ENCODE measurements at regions of chr9 and their contacts with region 1.

Region 1: DNA sequence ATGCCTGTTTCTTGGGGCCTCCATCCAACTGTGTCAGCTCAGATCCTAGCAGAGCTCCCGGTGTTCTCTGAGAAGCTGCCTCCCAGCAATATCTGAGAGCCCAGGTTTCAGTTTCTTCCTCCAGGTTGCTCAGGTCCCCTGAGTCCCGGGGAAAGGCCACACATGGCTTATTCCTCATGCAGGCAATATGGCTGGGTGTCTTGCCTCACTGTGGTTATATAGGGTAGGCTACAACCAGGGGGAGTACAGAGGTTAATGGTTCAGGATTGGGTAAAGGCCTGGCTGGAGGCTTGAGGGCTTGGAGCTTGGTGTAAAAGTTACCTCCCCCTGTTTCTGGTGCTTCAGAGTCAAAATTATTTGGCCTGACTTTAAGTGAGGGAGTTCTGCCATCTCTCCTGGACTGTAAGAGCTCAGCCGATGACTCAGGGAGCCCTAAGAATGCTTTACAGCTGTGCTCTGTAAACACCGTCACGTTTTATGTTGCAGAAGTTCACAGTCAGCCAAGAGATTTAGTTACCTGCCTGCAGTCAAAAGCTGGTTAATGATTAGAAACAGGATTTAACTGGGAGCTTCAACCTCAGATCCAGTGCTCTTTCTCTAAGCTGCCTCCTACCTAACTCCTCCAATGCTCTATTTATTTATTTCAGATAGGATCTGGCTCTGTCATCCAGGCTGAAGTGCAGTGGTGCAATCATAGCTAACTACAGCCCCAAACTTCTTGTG is 24.3 kb upstream of the UBAP2 start:
- DNase-seq: no peak
- ATAC-seq: peak; percentile 35
- H3K4me3 Mint-ChIP-seq: no peak overlapping the region
- H3K27ac Mint-ChIP-seq: no peak overlapping the region
- H3K4me1 Mint-ChIP-seq: peaks cover 2% of the 10 kb centered on the region
- H3K27me3 Mint-ChIP-seq: no peaks in the 10 kb centered on the region

Region 2: GRCh38 chr9:33988219-33988890 is 84.7 kb before region 1 on chr9:
- CTCF ChIA-PET with region 1: interaction called, 10 read pairs
- POLR2A ChIA-PET with region 1: no interaction called
- DNase-seq: no peak
- ATAC-seq: no peak
- H3K4me3 Mint-ChIP-seq: no peak overlapping the region
- H3K27ac Mint-ChIP-seq: no peak overlapping the region
- H3K4me1 Mint-ChIP-seq: peaks cover 12% of the 10 kb centered on the region
- H3K27me3 Mint-ChIP-seq: no peaks in the 10 kb centered on the region

Region 3: DNA sequence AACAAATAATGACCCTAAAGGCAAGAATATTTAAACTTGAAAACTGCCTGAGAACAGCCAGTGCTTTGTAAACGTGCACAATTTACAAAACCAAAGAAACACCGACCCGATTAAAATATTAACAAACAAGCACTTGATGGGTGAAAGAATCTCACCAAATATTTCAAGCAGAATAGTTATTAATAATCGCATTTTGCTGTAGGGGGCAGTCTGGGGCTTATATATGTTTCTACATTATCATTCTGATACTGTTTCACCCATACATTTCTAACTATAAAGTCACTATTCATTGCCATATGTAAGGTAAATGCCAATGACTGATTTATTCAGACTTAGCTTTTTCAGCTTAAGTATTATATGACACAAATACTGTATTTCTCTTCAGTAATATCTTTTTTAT is 62.0 kb before region 1 on chr9:
- CTCF ChIA-PET with region 1: interaction called, 25 read pairs
- POLR2A ChIA-PET with region 1: no interaction called
- DNase-seq: no peak
- ATAC-seq: no peak
- H3K4me3 Mint-ChIP-seq: no peak overlapping the region
- H3K27ac Mint-ChIP-seq: no peak overlapping the region
- H3K4me1 Mint-ChIP-seq: no peaks in the 10 kb centered on the region
- H3K27me3 Mint-ChIP-seq: no peaks in the 10 kb centered on the region

Region 4: GRCh38 chr9:34048923-34049697 is 23.9 kb before region 1 on chr9:
- CTCF ChIA-PET with region 1: interaction called, 22 read pairs
- POLR2A ChIA-PET with region 1: interaction called, 13 read pairs
- DNase-seq: peak; percentile 98
- ATAC-seq: peak; percentile 86
- H3K4me3 Mint-ChIP-seq: peak overlapping the region; percentile 95
- H3K27ac Mint-ChIP-seq: peak overlapping the region; percentile 99
- H3K4me1 Mint-ChIP-seq: peaks cover 49% of the 10 kb centered on the region
- H3K27me3 Mint-ChIP-seq: no peaks in the 10 kb centered on the region

Region 5: GRCh38 chr9:34084562-34084961 is 11.5 kb after region 1 on chr9:
- CTCF ChIA-PET with region 1: interaction called, 21 read pairs
- POLR2A ChIA-PET with region 1: no interaction called
- DNase-seq: no peak
- ATAC-seq: no peak
- H3K4me3 Mint-ChIP-seq: no peak overlapping the region
- H3K27ac Mint-ChIP-seq: no peak overlapping the region
- H3K4me1 Mint-ChIP-seq: no peaks in the 10 kb centered on the region
- H3K27me3 Mint-ChIP-seq: no peaks in the 10 kb centered on the region

Region 6: GRCh38 chr9:34252670-34253459 is 179.8 kb after region 1 on chr9:
- CTCF ChIA-PET with region 1: interaction called, 13 read pairs
- POLR2A ChIA-PET with region 1: no interaction called
- DNase-seq: peak; percentile 72
- ATAC-seq: peak; percentile 66
- H3K4me3 Mint-ChIP-seq: no peak overlapping the region
- H3K27ac Mint-ChIP-seq: no peak overlapping the region
- H3K4me1 Mint-ChIP-seq: peaks cover 20% of the 10 kb centered on the region
- H3K27me3 Mint-ChIP-seq: no peaks in the 10 kb centered on the region

Region 7: DNA sequence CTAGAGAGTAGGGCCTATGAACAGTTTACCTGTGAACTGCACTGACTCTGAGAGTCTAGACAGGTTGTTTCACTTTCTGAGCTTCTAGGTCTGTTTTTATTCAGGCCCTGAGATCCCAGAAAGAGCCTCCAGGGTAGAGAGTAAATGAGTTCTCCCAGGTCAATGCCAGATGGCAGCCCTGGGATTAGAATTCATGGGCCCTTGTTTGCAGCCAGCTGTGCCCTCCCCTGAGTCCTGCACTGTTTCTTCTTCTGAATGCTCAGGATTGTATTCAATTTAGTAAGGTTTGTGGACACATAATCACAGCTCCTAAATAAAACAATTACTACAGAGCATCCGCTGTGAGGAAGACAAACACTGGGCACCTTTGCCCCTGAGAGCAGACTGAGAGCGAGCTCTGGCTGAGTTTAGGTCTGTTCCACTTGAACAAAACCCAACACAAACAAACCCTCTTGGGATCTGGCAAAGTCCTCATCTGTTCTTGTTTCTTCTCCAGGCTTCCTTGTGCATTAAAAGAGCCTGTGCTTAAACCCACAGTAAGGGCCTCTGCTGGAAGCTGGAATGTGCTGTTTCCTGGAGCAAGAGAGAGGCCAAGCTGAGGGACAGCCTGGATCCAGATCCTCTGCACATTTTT is 355.4 kb after region 1 on chr9:
- CTCF ChIA-PET with region 1: no interaction called
- POLR2A ChIA-PET with region 1: no interaction called
- DNase-seq: no peak
- ATAC-seq: no peak
- H3K4me3 Mint-ChIP-seq: no peak overlapping the region
- H3K27ac Mint-ChIP-seq: no peak overlapping the region
- H3K4me1 Mint-ChIP-seq: no peaks in the 10 kb centered on the region
- H3K27me3 Mint-ChIP-seq: no peaks in the 10 kb centered on the region